Activated CD4-positive, alpha-beta T cell treated with anti-CD3 and anti-CD28 coated beads for 36 hours (primary cell): ENCODE measurements at regions of chr11 and their contacts with region 1.

Region 1: DNA sequence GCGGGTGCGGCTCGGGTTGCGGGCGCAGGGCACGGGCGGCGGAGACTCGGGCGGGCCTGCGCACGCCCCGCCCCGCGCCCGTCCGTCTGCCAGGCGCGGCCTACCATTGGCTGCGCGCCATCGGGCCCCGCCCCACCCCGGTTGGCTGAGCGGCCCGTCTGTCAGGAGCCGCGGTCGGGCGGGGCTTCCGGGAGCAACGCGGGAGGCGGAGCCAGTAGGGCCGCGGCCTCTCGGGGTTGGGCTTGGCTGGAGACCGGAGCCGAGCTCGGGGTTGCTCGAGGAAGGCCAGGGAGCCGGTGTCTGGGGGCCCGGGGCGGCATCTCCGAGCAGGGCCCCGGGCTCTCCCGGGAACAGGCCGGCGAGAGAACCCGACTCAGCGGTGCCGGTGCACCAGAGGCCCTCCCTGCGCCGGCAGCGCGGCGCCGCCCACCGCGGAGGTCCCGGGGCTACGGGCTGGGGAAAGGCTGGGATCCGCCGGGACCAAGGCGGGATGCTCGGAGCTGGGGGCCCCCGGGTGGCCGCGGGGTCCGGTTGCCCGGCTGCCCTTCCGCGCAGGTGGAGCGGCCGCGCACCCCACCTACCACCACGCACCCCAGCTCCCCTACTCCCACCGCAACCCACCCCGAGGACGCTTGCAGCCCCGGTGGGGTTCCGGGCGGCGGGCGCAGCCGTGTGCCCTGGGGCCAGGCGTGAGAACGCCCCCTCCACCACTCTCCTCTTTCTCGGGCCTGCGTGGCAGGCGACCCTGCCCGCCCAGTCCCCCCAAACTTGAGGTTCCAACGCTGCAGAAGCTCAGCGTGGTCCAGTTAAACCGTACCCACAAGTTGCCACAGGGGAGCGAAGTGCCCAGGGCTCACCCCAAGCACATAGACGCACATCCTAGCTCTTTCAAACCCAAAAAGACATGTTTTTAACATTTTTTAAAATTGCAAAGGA is at the start of gene HRAS:
- DNase-seq: peak; percentile 98
- ATAC-seq: peak; percentile 93
- H3K4me3 Mint-ChIP-seq: peak within 1 kb of the TSS; percentile 79
- H3K27ac Mint-ChIP-seq: peak within 1 kb of the TSS; percentile 81
- H3K4me1 Mint-ChIP-seq: peaks cover 17% of the 10 kb centered on the region
- H3K27me3 Mint-ChIP-seq: no peaks in the 10 kb centered on the region
- total RNA-seq, gene HRAS: 26.8 to 41.9 TPM

Region 2: DNA sequence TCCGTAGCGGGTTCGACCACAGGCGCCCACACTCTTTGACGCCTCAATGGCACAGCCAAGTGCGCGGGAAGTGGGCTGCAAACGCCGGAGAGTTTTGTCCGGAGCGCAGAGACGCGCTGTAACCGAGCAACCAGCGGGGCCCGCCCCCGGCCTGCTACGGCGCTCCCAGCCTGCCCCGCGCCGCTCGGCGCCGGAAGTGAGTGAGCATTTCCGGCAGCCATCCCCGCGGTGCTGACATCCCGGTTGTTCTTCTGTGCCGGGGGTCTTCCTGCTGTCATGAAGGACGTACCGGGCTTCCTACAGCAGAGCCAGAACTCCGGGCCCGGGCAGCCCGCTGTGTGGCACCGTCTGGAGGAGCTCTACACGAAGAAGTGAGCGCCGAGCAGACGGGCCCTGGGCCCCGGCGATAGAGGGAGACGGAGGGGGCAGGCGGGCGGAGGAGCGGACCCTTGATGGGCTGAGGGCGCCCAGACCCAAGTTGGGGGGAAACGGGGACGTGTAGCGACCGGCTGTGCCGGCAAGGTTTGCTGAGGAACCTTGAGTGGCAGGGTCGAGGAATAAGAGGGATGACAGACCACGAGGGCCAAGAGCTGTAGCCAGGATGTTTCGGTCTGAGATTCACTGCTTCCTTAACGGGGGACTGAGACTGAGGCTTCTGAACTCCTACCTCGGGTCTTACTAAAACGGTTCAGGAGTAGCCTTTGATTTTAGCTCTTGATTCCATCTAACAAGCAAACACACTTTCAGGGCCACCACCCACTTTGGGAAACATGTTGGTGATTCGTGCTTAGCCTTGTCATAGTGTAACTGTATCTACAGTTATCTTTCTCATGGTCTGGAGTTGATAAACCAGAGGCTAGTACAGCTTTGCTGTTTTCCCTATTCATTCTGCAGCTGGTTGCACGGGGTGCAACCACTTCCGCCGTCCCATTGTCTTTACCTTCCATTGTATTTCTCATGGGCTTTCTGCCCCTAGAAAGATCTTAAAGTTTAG is 298.7 kb before region 1 on chr11 and contains the start of gene PSMD13:
- CTCF ChIA-PET with region 1: interaction called, 4 read pairs
- POLR2A ChIA-PET with region 1: no interaction called
- intact Hi-C with region 1: loop called in 1 of 2 experiments (anchors 1 kb)
- DNase-seq: peak; percentile 96
- ATAC-seq: peak; percentile 86
- H3K4me3 Mint-ChIP-seq: peak within 1 kb of the TSS; percentile 92
- H3K27ac Mint-ChIP-seq: peak within 1 kb of the TSS; percentile 99
- H3K4me1 Mint-ChIP-seq: peaks cover 48% of the 10 kb centered on the region
- H3K27me3 Mint-ChIP-seq: no peaks in the 10 kb centered on the region
- total RNA-seq, gene PSMD13: 134 to 212 TPM

Region 3: GRCh38 chr11:447923-448731 is 87.7 kb before region 1 on chr11:
- CTCF ChIA-PET with region 1: interaction called, 3 read pairs
- POLR2A ChIA-PET with region 1: no interaction called
- intact Hi-C with region 1: loop called in 1 of 2 experiments (anchors 1 kb)
- DNase-seq: peak; percentile 99
- ATAC-seq: peak; percentile 79
- H3K4me3 Mint-ChIP-seq: peak overlapping the region; percentile 86
- H3K27ac Mint-ChIP-seq: peak overlapping the region; percentile 93
- H3K4me1 Mint-ChIP-seq: peaks cover 16% of the 10 kb centered on the region
- H3K27me3 Mint-ChIP-seq: peaks cover 3% of the 10 kb centered on the region

Region 4: GRCh38 chr11:492427-493226 is 43.2 kb before region 1 on chr11:
- CTCF ChIA-PET with region 1: no interaction called
- POLR2A ChIA-PET with region 1: no interaction called
- intact Hi-C with region 1: no loop called
- DNase-seq: no peak
- ATAC-seq: no peak
- H3K4me3 Mint-ChIP-seq: no peak overlapping the region
- H3K27ac Mint-ChIP-seq: no peak overlapping the region
- H3K4me1 Mint-ChIP-seq: no peaks in the 10 kb centered on the region
- H3K27me3 Mint-ChIP-seq: no peaks in the 10 kb centered on the region

Region 5: DNA sequence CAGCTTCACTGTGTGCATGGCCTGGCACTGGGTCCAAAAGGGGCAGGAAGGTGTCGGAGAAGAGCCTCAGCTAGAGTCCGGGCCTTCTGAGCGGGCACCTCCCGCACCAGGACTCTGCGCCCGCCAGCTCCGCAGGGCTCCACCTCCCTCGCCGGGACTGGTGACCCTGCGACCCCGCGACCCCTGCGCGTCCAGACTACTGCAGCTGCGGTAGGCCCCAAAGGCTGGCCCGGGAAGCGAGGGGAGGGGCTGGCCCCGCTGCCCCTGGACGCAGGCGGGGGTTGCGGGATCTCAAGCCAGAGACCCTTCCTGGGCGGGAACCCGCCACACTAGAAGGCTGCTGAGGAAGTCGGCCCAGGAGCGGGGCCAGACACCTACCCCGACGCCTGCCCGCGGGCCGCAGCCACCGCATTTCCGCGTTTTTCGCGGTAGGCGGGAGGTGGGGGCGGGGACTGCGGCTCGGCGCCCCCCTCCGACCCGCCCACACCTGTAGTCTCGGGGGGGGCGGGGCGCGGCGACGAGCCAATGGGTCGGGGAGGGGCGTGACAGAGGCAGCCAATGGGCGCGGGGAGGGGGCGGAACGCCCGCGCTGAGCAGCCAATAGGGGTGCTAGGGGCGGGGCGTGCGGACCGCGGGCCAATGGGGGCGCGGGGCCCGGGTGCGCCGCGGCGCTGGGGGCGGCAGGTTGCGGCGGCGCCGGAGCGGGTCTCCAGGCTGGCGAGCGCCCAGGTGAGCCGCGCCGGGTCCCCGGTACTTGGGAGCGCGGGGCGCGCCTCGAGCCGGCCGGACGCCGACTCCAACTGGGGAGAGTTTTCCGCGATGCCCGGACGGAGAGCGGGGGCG is 24.7 kb after region 1 on chr11 and contains the starts of genes LMNTD2 and RASSF7:
- CTCF ChIA-PET with region 1: interaction called, 3 read pairs
- POLR2A ChIA-PET with region 1: no interaction called
- intact Hi-C with region 1: loop called in 1 of 2 experiments (anchors 1 kb)
- DNase-seq: peak; percentile 97
- ATAC-seq: peak; percentile 93
- H3K4me3 Mint-ChIP-seq: peak within 1 kb of the TSS; percentile 85
- H3K27ac Mint-ChIP-seq: peak within 1 kb of the TSS; percentile 72
- H3K4me1 Mint-ChIP-seq: peaks cover 8% of the 10 kb centered on the region
- H3K27me3 Mint-ChIP-seq: peaks cover 2% of the 10 kb centered on the region
- total RNA-seq, gene LMNTD2: 2.7 to 4.9 TPM
- total RNA-seq, gene RASSF7: 16.8 TPM

Region 6: DNA sequence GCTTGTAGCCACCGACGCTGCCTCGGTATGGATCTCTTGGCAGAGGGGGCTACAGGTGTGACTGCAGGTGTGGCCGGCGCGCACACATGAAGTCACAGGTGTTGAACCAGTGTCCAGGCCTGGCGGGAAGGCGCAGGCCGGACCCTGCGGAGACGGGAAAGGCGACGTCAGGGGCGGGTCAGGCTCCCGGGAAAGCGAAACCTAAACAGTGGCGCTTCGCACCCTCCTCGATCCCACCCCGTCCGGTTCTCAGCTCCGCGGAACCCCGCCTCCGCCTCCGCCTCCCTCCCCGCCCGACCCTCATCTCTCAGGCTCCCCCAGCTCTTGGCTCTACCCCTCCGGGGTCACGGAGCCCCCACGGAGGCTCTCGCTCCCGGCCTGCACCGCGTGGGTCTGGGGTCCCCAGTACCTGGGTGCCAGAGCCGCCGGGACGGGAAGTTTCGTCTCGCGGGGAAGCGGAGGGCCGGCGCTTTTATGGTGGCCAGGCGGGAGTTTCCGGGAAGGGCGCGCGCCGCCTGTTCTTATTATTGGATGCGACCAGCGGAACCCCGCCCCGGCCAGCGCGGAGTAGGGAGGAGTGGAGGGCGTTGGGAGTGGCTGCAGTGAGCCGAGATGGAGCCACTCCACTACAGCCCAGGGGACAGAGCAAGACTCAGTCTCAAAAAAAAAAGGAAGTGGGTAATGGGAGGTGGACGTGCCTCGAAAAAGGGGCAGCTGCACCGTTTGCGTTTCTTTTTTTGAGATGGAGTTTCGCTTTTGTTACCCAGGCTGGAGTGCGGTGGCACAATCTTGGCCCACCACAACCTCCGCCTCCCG is 79.9 kb after region 1 on chr11 and contains the start of gene IRF7:
- CTCF ChIA-PET with region 1: no interaction called
- POLR2A ChIA-PET with region 1: no interaction called
- intact Hi-C with region 1: loop called in 1 of 2 experiments (anchors 1 kb)
- DNase-seq: peak; percentile 93
- ATAC-seq: peak; percentile 81
- H3K4me3 Mint-ChIP-seq: peak within 1 kb of the TSS; percentile 85
- H3K27ac Mint-ChIP-seq: peak within 1 kb of the TSS; percentile 95
- H3K4me1 Mint-ChIP-seq: peaks cover 13% of the 10 kb centered on the region
- H3K27me3 Mint-ChIP-seq: no peaks in the 10 kb centered on the region
- total RNA-seq, gene IRF7: 57.1 to 62.6 TPM

Region 7: GRCh38 chr11:680476-680875 is 144.7 kb after region 1 on chr11:
- CTCF ChIA-PET with region 1: no interaction called
- POLR2A ChIA-PET with region 1: no interaction called
- intact Hi-C with region 1: no loop called
- DNase-seq: no peak
- ATAC-seq: no peak
- H3K4me3 Mint-ChIP-seq: no peak overlapping the region
- H3K27ac Mint-ChIP-seq: no peak overlapping the region
- H3K4me1 Mint-ChIP-seq: no peaks in the 10 kb centered on the region
- H3K27me3 Mint-ChIP-seq: no peaks in the 10 kb centered on the region

Region 8: DNA sequence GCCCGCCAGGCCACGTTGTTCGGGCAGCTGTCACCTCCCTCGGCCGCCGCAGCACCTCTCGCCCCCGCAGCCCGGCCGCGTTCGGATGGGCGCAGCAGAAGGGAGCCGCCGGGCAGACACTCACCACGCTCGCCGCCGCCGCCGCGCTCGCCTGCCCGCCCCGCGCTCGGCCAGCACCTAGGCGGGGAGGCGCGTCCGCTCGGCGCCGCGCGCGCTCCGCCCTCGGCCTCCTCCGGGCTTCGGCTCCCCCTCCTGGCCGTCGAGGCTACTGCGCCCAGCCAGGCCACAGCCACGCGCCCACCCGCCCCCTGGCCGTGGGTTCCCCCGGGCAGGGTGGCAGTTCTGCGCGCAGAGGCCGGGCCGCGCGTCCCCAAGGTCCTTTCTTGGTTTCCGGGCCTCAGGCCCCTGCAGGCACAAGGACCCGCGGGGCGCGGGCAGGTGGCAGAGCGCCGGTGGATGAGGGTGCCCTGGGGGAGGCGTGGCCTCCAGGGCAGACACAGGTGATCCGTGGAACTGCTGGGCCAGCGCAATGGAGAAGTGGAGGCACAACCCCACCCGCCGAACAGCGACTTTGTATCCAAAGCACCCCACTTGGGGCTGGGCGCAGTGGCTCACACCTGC is 262.4 kb after region 1 on chr11 and contains the start of gene SLC25A22:
- CTCF ChIA-PET with region 1: no interaction called
- POLR2A ChIA-PET with region 1: no interaction called
- intact Hi-C with region 1: loop called in 1 of 2 experiments (anchors 1 kb)
- DNase-seq: peak; percentile 92
- ATAC-seq: peak; percentile 63
- H3K4me3 Mint-ChIP-seq: peak within 1 kb of the TSS; percentile 79
- H3K27ac Mint-ChIP-seq: peak within 1 kb of the TSS; percentile 67
- H3K4me1 Mint-ChIP-seq: peaks cover 13% of the 10 kb centered on the region
- H3K27me3 Mint-ChIP-seq: no peaks in the 10 kb centered on the region
- total RNA-seq, gene SLC25A22: 33.9 to 36.6 TPM